Left cardiac atrium (tissue), 4 donors: ENCODE measurements at regions of chr22 and their contacts with region 1.

Region 1: DNA sequence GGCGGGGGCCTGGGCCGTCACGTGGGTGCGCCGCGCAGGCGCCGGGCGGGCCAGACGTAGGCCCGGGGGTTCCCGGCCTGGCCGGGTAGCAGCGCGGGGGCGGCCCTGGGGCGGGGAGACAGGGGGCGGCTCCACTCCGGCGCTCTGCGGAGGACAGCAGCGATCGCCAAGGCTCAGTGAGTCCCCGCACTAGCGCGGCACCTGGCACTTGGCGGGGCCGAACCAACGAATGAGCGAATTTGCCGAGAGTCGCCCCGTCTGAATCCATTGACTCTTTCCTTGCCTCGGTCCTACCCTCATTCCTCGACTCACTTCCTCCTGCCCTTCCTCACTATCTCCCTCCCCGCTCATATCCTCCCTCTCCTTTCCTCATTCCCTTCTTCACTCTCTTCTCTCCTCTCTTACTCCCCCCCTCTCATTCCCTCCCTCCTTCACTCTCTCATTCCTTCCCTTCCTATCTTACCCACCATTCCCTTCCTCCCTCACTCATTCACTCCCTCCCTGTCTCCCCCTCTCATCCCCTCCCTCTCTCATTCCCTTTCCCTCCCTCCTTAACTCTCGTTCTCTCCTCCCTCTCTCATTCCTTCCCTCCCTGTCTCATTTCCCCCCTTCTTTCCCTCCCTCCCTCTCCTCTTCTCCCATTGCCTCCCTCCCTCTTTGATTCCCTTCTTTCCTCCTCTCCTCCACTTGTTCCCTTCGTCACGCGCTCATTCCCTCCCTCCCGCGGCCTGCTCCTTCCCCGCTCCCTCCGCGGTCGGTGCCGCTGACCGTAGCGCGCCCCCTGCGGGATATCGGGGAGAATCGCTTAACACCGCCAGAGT is 476 bp upstream of the KLHL22 start:
- DNase-seq: peak; percentile 94
- ATAC-seq: peak; percentile 97

Region 2: GRCh38 chr22:20430720-20431510 is 65.2 kb before region 1 on chr22:
- intact Hi-C with region 1: loop called in 1 of 2 experiments (anchors 10 kb)
- DNase-seq: peak; percentile 55
- ATAC-seq: peak; percentile 35 to 43

Region 3: DNA sequence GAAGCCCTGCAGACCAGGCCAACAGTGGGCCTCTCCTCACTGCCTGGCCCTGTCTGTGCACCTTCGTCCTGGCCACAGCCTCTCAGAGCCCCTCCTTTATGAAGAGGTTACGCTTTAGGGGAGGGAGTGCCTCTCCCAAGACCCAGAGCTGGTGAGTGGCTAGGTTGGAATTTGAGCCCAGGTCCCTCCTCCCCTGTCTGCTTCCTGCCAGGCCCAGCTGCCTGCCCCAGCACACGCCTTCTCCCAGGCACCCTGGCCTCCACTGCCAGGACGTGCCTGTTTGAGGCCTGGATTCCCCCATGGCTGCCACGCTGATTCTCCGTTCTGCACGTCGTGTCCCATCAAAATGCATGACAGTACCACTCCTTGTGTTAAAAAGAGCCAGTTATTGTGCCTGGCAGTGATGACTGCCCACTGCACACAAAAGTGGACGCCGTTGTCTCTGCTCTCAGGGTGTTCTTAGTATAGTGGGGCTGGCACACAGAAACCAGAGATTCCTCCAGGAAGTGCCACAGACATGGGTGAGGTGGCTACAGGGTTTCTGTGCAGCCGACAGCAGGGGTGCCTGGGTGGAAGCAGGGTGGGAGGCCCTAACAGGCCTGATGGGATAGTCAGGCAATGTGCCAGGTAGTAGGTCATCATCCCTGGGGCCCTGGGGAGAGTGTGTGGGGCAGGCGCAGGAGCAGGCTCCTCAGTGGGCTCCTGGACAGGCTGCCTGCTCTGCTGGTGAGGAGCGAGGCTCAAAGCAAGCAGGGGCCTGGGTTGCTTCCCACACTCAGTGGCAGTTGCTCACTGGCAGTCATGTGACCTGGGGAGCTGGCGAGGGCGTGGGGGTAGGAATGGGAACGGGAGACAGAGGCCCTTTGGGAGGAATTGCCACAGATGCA is 35.5 kb after region 1 on chr22:
- intact Hi-C with region 1: no loop called
- DNase-seq: peak; percentile 63
- ATAC-seq: peak; percentile 85 to 93

Region 4: GRCh38 chr22:20981787-20982562 is 485.9 kb after region 1 on chr22 and contains the start of gene LZTR1:
- intact Hi-C with region 1: no loop called
- DNase-seq: peak; percentile 88
- ATAC-seq: peak; percentile 93 to 94
- total RNA-seq, gene LZTR1: 26.9 to 29.1 TPM